ENCODE measurements at regions of chr3 and their contacts with region 1.

Region 1: DNA sequence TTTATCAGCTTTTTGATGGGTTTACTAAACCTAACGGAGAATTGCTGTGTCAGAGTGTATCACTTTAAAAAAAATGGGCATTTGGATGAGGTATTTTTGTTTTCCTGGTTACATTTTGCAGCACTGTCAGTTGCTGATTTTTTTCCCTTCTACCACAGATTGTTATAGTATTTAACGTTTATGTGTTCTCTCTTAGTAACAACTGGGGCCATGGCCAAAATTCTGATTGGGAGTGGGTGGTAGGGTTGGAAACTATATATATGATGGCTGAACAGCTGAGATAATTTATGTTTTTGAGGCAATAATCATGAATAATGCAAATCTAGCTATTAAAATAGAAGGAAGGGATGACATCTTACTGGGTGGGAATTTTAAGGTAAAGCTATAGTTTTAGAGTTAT is 229.4 kb upstream of the SUCLG2 start:
- DNase-seq: no peak
- H3K4me3 ChIP-seq: no peak overlapping the region
- H3K27ac ChIP-seq: no peak overlapping the region
- H3K4me1 ChIP-seq: no peaks in the 10 kb centered on the region
- H3K27me3 ChIP-seq: no peaks in the 10 kb centered on the region
- CTCF ChIP-seq: no peak

Region 2: DNA sequence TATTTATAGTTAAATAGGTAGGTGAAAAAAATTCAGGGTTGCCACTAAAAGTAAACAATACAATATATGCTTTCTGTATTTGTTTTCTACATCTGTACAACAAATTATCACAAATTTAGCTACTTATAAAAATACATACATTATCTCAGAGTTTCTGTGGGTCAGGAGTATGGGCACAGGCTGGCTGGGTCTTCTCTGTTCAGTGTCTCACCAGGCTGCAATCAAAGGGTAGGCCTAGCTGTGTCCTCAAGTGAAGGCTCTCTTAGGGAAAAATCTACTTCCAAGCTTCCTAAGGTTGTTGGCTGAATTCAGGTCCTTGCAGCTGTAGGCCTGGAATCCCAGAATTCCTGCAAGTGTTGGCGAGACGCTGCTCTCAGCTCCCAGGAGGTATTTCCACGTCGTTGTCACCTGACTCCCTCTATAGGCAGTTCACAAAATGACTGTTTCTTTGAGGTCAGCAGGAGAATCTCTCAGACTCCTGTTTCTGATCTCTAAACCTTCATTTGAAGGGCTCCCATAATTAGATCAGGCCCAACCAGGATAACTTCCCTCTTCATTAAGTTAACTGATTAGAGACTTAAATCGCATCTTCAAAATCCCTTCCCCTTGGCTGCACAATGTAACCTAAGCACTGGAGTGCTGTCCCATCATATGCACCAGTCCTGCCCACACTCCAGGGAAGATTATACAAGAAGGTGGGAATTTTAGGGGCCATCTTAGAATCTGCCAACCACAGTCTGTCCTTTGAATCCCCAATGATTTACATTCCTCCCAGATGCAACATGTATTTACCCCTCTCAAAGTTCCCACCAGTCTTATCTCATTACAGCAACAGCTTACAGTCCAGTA is 525.9 kb before region 1 on chr3:
- CTCF ChIA-PET with region 1: no interaction called
- dilution Hi-C with region 1: no loop called
- in situ Hi-C with region 1: no loop called
- intact Hi-C with region 1: no loop called
- DNase-seq: peak; percentile 8
- H3K4me3 ChIP-seq: no peak overlapping the region
- H3K27ac ChIP-seq: no peak overlapping the region
- H3K4me1 ChIP-seq: no peaks in the 10 kb centered on the region
- H3K27me3 ChIP-seq: no peaks in the 10 kb centered on the region
- CTCF ChIP-seq: peak; percentile 28 to 47

Region 3: DNA sequence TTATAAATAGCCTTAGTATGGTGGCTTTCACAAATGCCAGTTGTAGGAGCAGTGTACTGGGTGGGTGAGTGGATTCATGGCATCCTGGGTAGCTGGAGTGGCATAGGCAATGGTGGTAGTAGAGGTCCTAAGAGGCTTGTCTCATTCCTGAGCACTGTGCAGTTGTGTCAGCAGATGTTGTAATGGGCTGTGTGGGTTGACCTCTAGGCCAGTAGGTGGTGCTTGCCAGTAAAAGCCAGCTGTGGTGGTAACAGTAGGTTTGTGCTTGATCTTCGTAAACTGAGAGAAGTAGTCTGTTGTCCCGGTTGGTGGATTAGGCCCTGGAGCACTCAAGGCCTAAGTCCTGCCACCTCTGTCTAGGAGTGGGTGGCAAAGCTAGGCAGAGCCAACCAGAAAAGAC is 79.7 kb before region 1 on chr3:
- CTCF ChIA-PET with region 1: no interaction called
- dilution Hi-C with region 1: loop called (anchors 5 kb)
- in situ Hi-C with region 1: no loop called
- intact Hi-C with region 1: no loop called
- DNase-seq: no peak
- H3K4me3 ChIP-seq: no peak overlapping the region
- H3K27ac ChIP-seq: no peak overlapping the region
- H3K4me1 ChIP-seq: no peaks in the 10 kb centered on the region
- H3K27me3 ChIP-seq: peaks cover 3% of the 10 kb centered on the region
- CTCF ChIP-seq: no peak

Region 4: GRCh38 chr3:67832817-67833216 is 50.9 kb before region 1 on chr3:
- CTCF ChIA-PET with region 1: no interaction called
- dilution Hi-C with region 1: loop called (anchors 5 kb)
- in situ Hi-C with region 1: no loop called
- intact Hi-C with region 1: no loop called
- DNase-seq: no peak
- H3K4me3 ChIP-seq: no peak overlapping the region
- H3K27ac ChIP-seq: no peak overlapping the region
- H3K4me1 ChIP-seq: no peaks in the 10 kb centered on the region
- H3K27me3 ChIP-seq: no peaks in the 10 kb centered on the region
- CTCF ChIP-seq: no peak

Region 5: DNA sequence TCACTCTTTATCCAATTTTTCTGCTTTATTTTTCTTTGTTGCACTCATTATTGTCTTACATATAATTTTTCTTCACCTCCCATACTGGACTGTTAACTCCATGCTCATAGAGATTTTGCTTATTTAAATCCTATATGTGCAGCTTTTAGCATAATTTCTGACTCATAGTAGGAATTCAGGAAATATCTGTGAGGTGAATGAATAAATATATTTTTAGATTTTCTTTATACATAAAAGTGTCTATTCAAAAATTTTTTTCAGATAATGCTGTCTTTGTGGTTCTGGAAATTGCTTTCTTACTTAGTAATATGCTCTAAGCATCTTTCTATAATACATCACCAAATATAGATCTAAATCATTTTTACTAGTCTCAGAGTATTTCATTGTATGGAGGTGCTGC is 37.6 kb before region 1 on chr3:
- CTCF ChIA-PET with region 1: no interaction called
- dilution Hi-C with region 1: no loop called
- in situ Hi-C with region 1: no loop called
- intact Hi-C with region 1: no loop called
- DNase-seq: no peak
- H3K4me3 ChIP-seq: no peak overlapping the region
- H3K27ac ChIP-seq: no peak overlapping the region
- H3K4me1 ChIP-seq: no peaks in the 10 kb centered on the region
- H3K27me3 ChIP-seq: no peaks in the 10 kb centered on the region
- CTCF ChIP-seq: no peak

Region 6: DNA sequence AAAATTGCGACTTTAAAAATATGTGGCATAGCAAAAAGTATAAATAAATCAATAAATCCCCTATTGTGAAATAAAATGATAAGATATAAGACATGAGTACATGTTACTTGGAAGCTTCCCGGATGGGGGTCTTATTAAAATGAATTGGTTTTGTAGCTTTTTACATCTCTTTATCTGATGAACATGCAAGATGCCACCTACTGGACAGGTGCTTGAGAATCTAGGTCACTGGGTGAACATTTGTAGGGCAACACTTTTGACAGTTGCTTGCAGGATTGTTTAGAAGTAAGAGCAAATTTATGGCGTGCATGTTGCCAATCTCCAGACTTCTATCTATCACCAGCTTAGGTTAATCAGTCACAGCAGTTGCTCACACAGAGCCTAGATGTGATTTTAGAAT is 133.3 kb after region 1 on chr3:
- CTCF ChIA-PET with region 1: no interaction called
- dilution Hi-C with region 1: no loop called
- in situ Hi-C with region 1: no loop called
- intact Hi-C with region 1: no loop called
- DNase-seq: no peak
- H3K4me3 ChIP-seq: no peak overlapping the region
- H3K27ac ChIP-seq: no peak overlapping the region
- H3K4me1 ChIP-seq: no peaks in the 10 kb centered on the region
- H3K27me3 ChIP-seq: no peaks in the 10 kb centered on the region
- CTCF ChIP-seq: peak in 1 of 2 donors; percentile 8